HCT116 (cell line): ENCODE measurements at regions of chrX and their contacts with region 1.

Region 1: GRCh38 chrX:12984629-12985319 is 9.9 kb downstream of the TMSB4X start:
- DNase-seq: peak; percentile 21
- ATAC-seq: peak; percentile 70
- H3K4me3 ChIP-seq: no peak overlapping the region; a peak in 1 of 4 replicates
- H3K27ac ChIP-seq: no peak overlapping the region
- H3K4me1 ChIP-seq: peaks cover 20 to 26% of the 10 kb centered on the region in 2 experiments
- H3K27me3 ChIP-seq: no peaks in the 10 kb centered on the region
- CTCF ChIP-seq: no peak
- POLR2A ChIP-seq: no peak
- RAD21 ChIP-seq: no peak

Region 2: GRCh38 chrX:13101441-13102139 is 116.8 kb after region 1 on chrX:
- CTCF ChIA-PET with region 1: no interaction called
- POLR2A ChIA-PET with region 1: no interaction called
- RAD21 ChIA-PET with region 1: no interaction called
- intact Hi-C with region 1: loop called (anchors 10 kb)
- DNase-seq: peak; percentile 73
- ATAC-seq: peak; percentile 99
- H3K4me3 ChIP-seq: peak overlapping the region in 1 of 2 experiments; percentile 37; a peak in 2 of 4 replicates
- H3K27ac ChIP-seq: no peak overlapping the region
- H3K4me1 ChIP-seq: peaks cover 15 to 32% of the 10 kb centered on the region in 2 experiments
- H3K27me3 ChIP-seq: no peaks in the 10 kb centered on the region
- CTCF ChIP-seq: no peak
- POLR2A ChIP-seq: no peak
- RAD21 ChIP-seq: peak; percentile 30; the same call in 1 of the 2 replicates